Activated CD8-positive, alpha-beta memory T cell treated with anti-CD3 and anti-CD28 coated beads, Interleukin-2, amount 10 ng/mL, durations not matched to agents 7 days and 5 days (primary cell): ENCODE measurements at regions of chr11 and their contacts with region 1.

Region 1: DNA sequence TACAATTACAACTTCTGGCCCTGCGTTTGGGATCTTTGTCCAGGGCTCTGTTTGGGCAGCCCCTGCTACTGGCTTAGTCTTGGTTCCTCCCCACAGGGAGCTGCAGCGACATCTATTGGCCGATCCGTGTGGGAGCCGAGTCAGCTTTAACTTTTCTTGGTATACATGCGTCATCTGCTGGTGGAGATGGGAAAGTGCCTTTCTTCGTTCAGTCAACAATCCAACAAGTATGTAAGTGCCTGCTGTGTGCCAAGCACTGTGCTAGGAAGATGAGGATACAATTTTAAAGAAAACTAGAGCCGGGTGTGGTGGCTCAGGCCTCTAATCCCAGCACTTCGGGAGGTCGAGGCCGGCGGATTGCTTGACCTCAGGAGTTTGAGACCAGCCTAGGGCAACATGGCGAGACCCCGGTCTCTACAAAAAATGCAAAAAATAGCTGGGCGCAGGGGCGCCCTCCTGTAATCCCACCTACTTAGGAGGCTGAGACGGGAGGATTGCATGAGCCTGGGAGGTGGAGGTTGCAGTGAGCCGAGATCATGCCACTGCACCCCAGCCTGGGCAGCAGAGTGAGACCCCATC is 8.2 kb downstream of the TPBGL start:
- DNase-seq: peak; percentile 92
- ATAC-seq: peak; percentile 91
- H3K4me3 Mint-ChIP-seq: no peak overlapping the region
- H3K27ac Mint-ChIP-seq: no peak overlapping the region
- H3K4me1 Mint-ChIP-seq: no peaks in the 10 kb centered on the region
- H3K27me3 Mint-ChIP-seq: peaks cover 51% of the 10 kb centered on the region

Region 2: GRCh38 chr11:74929431-74930363 is 319.1 kb before region 1 on chr11:
- CTCF ChIA-PET with region 1: interaction called, 44 read pairs
- DNase-seq: peak; percentile 80
- ATAC-seq: peak; percentile 66
- H3K4me3 Mint-ChIP-seq: no peak overlapping the region
- H3K27ac Mint-ChIP-seq: no peak overlapping the region
- H3K4me1 Mint-ChIP-seq: peaks cover 54% of the 10 kb centered on the region
- H3K27me3 Mint-ChIP-seq: no peaks in the 10 kb centered on the region

Region 3: GRCh38 chr11:74980634-74981033 is 268.1 kb before region 1 on chr11:
- CTCF ChIA-PET with region 1: no interaction called
- DNase-seq: no peak
- ATAC-seq: no peak
- H3K4me3 Mint-ChIP-seq: no peak overlapping the region
- H3K27ac Mint-ChIP-seq: peak overlapping the region; percentile 17
- H3K4me1 Mint-ChIP-seq: no peaks in the 10 kb centered on the region
- H3K27me3 Mint-ChIP-seq: no peaks in the 10 kb centered on the region

Region 4: GRCh38 chr11:75031771-75032549 is 216.8 kb before region 1 on chr11:
- CTCF ChIA-PET with region 1: interaction called, 24 read pairs
- DNase-seq: peak; percentile 68
- ATAC-seq: peak; percentile 75
- H3K4me3 Mint-ChIP-seq: no peak overlapping the region
- H3K27ac Mint-ChIP-seq: no peak overlapping the region
- H3K4me1 Mint-ChIP-seq: peaks cover 9% of the 10 kb centered on the region
- H3K27me3 Mint-ChIP-seq: no peaks in the 10 kb centered on the region

Region 5: DNA sequence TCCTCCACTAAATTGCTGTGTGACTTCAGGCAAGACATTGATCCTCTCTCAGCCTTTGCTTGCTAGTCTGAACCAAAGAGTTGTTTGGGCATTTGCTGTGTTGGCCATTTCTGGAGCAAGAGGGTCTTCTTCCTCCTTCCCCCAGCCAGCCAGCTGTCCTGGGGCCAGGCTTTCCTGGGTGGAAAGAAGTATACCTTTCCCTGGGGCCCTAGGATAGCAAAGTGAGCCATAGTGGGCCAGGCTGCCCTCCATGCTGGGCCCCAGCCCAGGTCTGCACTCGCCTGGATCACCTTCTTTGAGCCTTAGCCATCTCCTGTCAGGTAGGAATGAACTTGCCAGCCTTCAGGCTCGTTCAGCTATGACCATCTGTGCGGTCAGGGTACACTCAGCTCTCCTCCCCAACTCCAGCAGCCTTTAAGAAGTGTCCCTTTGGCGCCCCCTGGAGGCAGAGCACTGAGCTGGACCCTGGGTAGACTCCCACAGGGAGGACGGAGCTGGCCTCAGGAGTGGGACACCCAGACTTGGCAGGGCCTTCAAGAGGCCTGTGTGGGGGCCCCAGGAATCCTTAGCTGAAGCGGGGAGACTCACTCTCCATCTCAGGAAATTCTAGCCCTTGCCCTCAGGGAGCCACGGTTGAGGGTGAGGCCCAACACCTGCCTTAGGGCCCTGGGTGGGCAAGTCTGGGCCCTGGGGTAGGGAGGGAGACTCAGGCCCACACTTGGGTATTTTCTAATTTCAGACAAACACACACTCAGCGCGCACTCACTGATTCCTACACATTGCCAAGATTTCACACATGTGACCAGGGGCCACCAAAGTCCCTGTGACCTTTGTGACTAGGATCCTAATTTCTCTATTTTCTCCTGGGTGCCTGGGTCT is 43.9 kb before region 1 on chr11:
- CTCF ChIA-PET with region 1: interaction called, 80 read pairs
- DNase-seq: peak; percentile 90
- ATAC-seq: peak; percentile 97
- H3K4me3 Mint-ChIP-seq: no peak overlapping the region
- H3K27ac Mint-ChIP-seq: no peak overlapping the region
- H3K4me1 Mint-ChIP-seq: no peaks in the 10 kb centered on the region
- H3K27me3 Mint-ChIP-seq: peaks cover 19% of the 10 kb centered on the region

Region 6: DNA sequence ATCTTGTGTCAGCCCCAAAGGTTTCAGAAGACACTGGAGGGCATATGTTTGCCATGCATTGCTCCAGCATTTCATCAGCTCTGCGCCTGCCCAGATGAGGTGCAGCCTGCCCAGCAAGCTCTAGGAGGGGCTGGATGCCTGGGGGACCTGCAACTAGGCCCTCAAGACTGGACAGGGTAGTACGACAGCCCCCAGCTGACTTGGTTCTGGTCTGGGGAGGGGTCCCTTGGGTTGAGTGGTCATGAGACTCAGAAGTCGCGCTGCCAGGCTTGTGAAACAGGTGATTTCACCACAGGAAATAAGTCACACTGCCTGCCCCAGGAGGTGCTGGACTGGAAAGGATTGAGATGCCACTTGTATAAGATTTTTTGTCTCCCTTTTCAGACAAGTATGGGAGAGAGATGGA is 15.2 kb after region 1 on chr11:
- CTCF ChIA-PET with region 1: interaction called, 34 read pairs
- DNase-seq: no peak
- ATAC-seq: peak; percentile 45
- H3K4me3 Mint-ChIP-seq: no peak overlapping the region
- H3K27ac Mint-ChIP-seq: peak overlapping the region; percentile 25
- H3K4me1 Mint-ChIP-seq: peaks cover 22% of the 10 kb centered on the region
- H3K27me3 Mint-ChIP-seq: no peaks in the 10 kb centered on the region

Region 7: DNA sequence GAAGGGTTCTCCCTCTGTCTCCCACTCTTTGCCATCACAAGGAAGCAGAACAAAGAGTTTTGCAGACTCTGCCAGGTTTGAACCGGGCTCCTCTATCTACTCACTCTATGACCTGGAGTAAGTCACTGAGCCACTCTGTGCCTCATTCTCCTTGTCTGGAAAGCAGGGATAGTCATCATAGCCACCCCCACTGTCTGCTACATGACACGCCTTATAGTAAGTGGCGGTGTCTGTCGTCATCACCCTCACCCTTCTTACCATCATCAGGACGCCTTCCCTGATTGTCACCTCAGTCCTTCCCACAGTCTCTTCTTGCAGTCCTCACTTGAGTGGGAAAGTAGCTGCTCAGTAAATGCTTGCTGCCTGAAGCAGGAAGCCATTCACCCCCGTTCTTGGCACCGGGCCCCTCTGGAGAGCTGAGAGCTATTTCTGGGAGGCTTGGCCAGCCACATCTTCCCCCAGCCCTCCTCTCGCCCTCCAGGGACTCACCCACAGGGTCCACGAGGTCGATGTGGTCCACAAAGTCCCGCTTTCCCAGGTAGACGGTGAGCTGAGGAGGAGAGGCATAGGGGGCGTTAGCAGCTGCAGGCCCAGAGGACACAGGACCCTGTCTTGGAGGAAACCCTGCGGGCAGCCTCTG is 38.2 kb after region 1 on chr11:
- CTCF ChIA-PET with region 1: no interaction called
- DNase-seq: no peak
- ATAC-seq: no peak
- H3K4me3 Mint-ChIP-seq: no peak overlapping the region
- H3K27ac Mint-ChIP-seq: no peak overlapping the region
- H3K4me1 Mint-ChIP-seq: no peaks in the 10 kb centered on the region
- H3K27me3 Mint-ChIP-seq: no peaks in the 10 kb centered on the region

Region 8: GRCh38 chr11:75311858-75312288 is 63.1 kb after region 1 on chr11:
- CTCF ChIA-PET with region 1: no interaction called
- DNase-seq: no peak
- ATAC-seq: no peak
- H3K4me3 Mint-ChIP-seq: no peak overlapping the region
- H3K27ac Mint-ChIP-seq: no peak overlapping the region
- H3K4me1 Mint-ChIP-seq: peaks cover 11% of the 10 kb centered on the region
- H3K27me3 Mint-ChIP-seq: no peaks in the 10 kb centered on the region

Region 9: GRCh38 chr11:75554258-75555022 is 305.7 kb after region 1 on chr11:
- CTCF ChIA-PET with region 1: no interaction called
- DNase-seq: no peak
- ATAC-seq: no peak
- H3K4me3 Mint-ChIP-seq: no peak overlapping the region
- H3K27ac Mint-ChIP-seq: no peak overlapping the region
- H3K4me1 Mint-ChIP-seq: peaks cover 3% of the 10 kb centered on the region
- H3K27me3 Mint-ChIP-seq: peaks cover 3% of the 10 kb centered on the region